ENCODE measurements at regions of chr4 and their contacts with region 1.

Region 1: GRCh38 chr4:2241410-2242353 is at the starts of genes HAUS3 and POLN:
- DNase-seq: peak; percentile 98
- H3K4me3 ChIP-seq: peak within 1 kb of the TSS; percentile 63 to 97 (median 97)
- H3K27ac ChIP-seq: peak within 1 kb of the TSS; percentile 30
- H3K4me1 ChIP-seq: peaks cover 33% of the 10 kb centered on the region
- H3K27me3 ChIP-seq: no peaks in the 10 kb centered on the region
- CTCF ChIP-seq: no peak
- POLR2A ChIP-seq: peak; percentile 72
- total RNA-seq, gene HAUS3: 15.9 and 16.0 TPM in 2 replicates
- total RNA-seq, gene POLN: 3.1 and 4.2 TPM in 2 replicates

Region 2: GRCh38 chr4:1981251-1982058 is 260.2 kb before region 1 on chr4:
- CTCF ChIA-PET with region 1: no interaction called
- POLR2A ChIA-PET with region 1: no interaction called
- dilution Hi-C with region 1: no loop called
- intact Hi-C with region 1: no loop called
- DNase-seq: no peak
- H3K4me3 ChIP-seq: no peak overlapping the region
- H3K27ac ChIP-seq: no peak overlapping the region
- H3K4me1 ChIP-seq: no peaks in the 10 kb centered on the region
- H3K27me3 ChIP-seq: no peaks in the 10 kb centered on the region
- CTCF ChIP-seq: no peak
- POLR2A ChIP-seq: no peak

Region 3: DNA sequence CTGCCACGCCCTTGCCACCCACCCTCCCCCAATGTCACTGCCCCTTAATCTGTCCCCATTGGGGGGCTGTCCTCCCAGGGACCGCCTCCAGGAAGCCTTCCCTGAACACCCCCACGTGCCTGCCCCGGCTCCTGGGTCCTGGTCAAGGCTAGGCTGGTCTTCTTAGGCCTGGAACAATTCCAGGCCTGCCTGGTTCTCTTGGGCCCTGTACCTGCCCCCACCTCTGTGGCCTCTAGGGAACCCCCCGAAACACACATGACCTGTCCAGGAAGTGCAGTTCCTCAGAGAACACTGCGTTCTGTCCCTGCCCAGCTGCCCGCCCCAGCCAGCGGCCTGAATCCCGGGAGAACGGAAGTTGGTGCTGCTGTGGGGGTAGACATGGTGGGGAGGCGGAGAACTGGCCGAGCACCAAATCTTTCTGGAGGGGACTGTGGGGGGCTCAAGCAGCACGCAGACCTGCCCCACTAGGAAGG is 15.1 kb after region 1 on chr4:
- CTCF ChIA-PET with region 1: interaction called, 3 read pairs
- POLR2A ChIA-PET with region 1: interaction called, 5 read pairs
- dilution Hi-C with region 1: no loop called
- intact Hi-C with region 1: loop called (anchors 1 kb)
- DNase-seq: peak; percentile 11
- H3K4me3 ChIP-seq: no peak overlapping the region
- H3K27ac ChIP-seq: peak overlapping the region; percentile 15
- H3K4me1 ChIP-seq: peaks cover 21% of the 10 kb centered on the region
- H3K27me3 ChIP-seq: no peaks in the 10 kb centered on the region
- CTCF ChIP-seq: no peak
- POLR2A ChIP-seq: no peak

Region 4: DNA sequence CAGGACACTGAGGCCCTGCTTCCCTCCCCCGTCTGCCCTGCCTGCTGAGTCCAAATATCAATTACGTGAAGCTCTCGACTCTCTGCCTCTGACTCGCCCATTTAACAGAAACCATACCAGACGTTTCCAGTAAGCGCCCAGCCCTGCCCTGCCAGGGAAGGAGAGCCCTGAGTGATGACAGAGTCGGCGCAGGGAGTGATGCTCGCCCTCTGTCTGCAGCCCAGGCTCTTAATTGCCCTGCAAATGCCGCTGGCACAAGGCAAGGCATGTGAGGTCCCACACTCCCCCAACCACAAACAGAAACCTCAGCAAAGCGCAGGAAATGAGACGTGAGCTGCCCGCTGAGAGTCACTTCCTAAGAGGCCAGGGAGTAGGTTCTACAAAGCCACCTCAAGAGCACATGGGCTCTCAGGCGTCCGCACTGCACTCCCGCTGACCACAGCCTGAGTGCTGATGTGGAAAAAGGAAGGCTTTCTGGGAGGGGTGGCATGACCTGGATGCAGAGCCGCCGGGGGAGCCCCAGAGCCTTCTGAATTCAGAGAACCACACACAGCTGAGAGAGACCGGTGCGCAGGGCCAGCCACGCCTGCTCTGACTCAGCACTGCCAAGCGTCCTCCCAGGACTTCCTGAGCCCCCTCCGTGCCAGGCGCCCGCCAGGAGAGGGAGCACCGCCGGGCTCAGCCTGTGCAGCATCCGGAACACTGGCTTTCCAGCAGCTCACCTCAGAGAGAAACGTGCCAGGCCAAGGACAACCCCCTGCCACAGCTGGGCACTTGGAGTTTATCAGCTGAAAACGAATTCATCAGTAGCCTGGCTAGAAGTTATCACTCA is 171.4 kb after region 1 on chr4:
- CTCF ChIA-PET with region 1: no interaction called
- POLR2A ChIA-PET with region 1: no interaction called
- dilution Hi-C with region 1: no loop called
- intact Hi-C with region 1: loop called (anchors 1 kb)
- DNase-seq: peak; percentile 96
- H3K4me3 ChIP-seq: peak overlapping the region in 2 of 3 experiments; percentile 18 to 22
- H3K27ac ChIP-seq: peak overlapping the region; percentile 77
- H3K4me1 ChIP-seq: peaks cover 43% of the 10 kb centered on the region
- H3K27me3 ChIP-seq: no peaks in the 10 kb centered on the region
- CTCF ChIP-seq: peak; percentile 49 to 69
- POLR2A ChIP-seq: no peak

Measured in endothelial cell of umbilical vein (primary cell).